PC-9 (cell line): ENCODE measurements at regions of chr16 and their contacts with region 1.

Region 1: DNA sequence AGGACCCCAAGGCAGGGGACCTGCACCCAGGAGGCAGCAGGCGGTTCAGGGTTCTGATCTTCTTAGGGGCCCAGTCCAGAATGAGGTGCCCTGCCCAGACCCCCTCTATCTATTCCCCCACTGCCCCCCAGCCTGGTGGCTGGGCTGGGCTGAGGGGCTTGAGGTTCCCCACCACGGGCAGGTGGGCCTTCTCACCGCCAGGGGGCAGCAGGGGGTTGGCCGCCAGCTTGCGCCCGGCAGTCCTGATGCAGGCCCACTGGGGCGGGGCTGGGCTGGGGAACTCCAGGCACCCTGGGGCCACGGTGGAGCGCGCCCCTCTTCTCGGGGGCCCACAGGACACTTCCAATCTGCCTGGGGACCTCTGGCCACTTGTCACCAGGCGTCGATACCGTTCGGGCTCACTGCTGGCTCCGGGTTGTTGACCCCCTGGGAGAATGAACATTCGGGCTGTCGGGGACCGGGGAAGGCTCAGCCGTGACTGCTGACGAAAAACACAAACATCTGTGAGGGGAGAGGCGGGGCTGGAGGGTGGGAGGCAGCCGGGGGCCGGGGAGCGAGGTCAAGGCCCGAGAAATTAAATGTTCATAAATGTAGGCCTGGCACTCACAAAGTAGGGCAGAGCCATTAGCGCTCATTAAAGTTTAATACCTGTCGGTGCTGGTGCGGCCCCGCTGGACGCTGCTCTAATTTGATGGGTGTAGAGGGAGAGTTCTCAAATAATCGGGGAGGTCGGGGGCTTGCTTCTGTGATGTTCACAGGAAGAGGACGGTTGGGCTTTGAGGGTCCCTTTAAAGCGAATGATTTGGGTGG is 219.2 kb upstream of the GSE1 start:
- DNase-seq: no peak
- H3K4me3 ChIP-seq: no peak overlapping the region
- H3K27ac ChIP-seq: no peak overlapping the region
- H3K4me1 ChIP-seq: peaks cover 36% of the 10 kb centered on the region
- H3K27me3 ChIP-seq: no peaks in the 10 kb centered on the region
- CTCF ChIP-seq: peak; percentile 66

Region 2: DNA sequence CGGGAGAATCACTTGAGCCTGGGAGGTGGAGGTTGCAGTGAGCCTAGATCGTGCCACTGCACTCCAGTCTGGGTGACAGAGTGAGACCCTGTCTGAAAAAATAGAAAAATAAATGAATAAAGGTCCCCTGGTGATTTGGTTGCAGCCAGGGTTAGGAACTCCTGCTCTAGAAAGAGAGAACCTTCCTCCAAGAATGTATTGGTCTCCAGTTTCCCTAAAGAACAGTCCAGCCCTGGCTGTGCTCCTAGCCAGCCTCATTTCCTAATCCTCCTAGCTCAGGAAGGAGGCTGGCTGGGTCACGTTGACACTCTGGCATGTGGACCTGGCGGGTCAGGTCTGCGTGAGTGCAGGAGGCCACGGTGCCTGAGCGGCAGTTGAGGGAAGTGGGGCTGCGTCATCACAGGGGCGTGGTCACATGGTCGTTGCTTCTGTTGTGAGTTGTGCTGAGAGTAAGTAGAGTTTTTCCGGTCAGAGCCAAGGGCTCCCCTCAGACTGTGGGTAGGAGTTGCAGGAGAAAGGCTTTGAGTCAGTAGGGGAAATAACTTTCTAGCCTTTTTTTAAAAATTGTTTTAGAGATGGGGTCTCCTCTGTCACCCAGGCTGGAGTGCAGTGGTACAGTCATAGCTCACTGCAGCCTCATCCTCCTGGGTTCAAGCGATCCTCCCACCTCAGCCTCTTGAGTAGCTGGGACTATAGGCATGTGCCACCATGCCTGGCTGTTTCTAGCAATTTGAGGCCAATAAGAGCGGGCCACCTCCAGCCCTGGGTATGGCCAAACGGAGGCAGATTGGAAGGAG is 87.7 kb before region 1 on chr16:
- CTCF ChIA-PET with region 1: no interaction called
- POLR2A ChIA-PET with region 1: no interaction called
- intact Hi-C with region 1: loop called (anchors 10 kb)
- DNase-seq: peak; percentile 83 to 88
- H3K4me3 ChIP-seq: no peak overlapping the region
- H3K27ac ChIP-seq: no peak overlapping the region
- H3K4me1 ChIP-seq: peaks cover 10% of the 10 kb centered on the region
- H3K27me3 ChIP-seq: no peaks in the 10 kb centered on the region
- CTCF ChIP-seq: no peak

Region 3: GRCh38 chr16:85321509-85322271 is 72.2 kb before region 1 on chr16:
- CTCF ChIA-PET with region 1: no interaction called
- POLR2A ChIA-PET with region 1: no interaction called
- intact Hi-C with region 1: no loop called
- DNase-seq: peak in 1 of 2 experiments; percentile 50
- H3K4me3 ChIP-seq: no peak overlapping the region
- H3K27ac ChIP-seq: no peak overlapping the region
- H3K4me1 ChIP-seq: no peaks in the 10 kb centered on the region
- H3K27me3 ChIP-seq: no peaks in the 10 kb centered on the region
- CTCF ChIP-seq: no peak